Prostate gland (tissue), 2 donors: ENCODE measurements at regions of chr20 and their contacts with region 1.

Region 1: GRCh38 chr20:34129518-34130162 is 17.6 kb upstream of the EIF2S2 start:
- DNase-seq: peak; percentile 72
- H3K4me3 ChIP-seq: no peak overlapping the region
- H3K27ac ChIP-seq: no peak overlapping the region
- H3K4me1 ChIP-seq: no peaks in the 10 kb centered on the region
- H3K27me3 ChIP-seq: no peaks in the 10 kb centered on the region
- CTCF ChIP-seq: peak; percentile 48 to 90 (median 89)
- POLR2A ChIP-seq: no peak

Region 2: DNA sequence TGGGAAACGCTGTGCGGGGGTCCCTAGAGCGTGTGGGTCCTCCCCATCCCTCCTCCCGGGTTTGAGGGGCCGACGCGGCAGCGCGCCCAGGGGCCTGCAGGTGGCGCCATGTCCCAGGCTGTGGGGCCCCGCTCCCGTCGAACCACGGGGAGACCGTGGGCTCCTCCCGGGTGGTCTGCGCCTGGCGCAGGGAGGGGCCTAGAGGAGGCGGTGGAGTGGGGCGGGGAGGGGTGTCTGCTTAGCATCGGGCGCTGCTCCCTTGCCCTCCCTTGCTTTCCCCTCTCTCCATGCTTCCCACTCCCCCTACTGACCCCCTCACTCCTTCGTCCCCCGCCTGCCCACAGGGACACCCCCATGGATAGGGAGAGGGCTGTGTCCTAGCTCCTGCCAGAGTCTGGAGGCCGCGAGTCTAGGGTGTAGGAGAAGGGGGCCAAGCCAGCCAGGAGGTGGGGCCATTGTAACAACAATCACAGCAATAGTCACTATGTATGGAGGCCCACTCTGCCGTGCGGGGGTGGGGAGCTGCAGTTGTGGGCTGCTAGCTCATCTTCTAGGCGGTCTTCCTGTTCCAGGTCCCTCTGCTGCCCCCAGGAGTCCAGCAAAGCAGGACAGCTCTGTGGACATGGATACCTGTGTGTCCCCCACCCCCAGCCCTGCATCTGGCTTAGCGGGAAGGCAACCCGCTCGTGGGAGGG is 266.8 kb before region 1 on chr20:
- intact Hi-C with region 1: loop called (anchors 2 kb)
- DNase-seq: peak; percentile 19
- H3K4me3 ChIP-seq: no peak overlapping the region
- H3K27ac ChIP-seq: no peak overlapping the region
- H3K4me1 ChIP-seq: no peaks in the 10 kb centered on the region
- H3K27me3 ChIP-seq: no peaks in the 10 kb centered on the region
- CTCF ChIP-seq: peak; percentile 35 to 67 (median 59)
- POLR2A ChIP-seq: no peak

Region 3: DNA sequence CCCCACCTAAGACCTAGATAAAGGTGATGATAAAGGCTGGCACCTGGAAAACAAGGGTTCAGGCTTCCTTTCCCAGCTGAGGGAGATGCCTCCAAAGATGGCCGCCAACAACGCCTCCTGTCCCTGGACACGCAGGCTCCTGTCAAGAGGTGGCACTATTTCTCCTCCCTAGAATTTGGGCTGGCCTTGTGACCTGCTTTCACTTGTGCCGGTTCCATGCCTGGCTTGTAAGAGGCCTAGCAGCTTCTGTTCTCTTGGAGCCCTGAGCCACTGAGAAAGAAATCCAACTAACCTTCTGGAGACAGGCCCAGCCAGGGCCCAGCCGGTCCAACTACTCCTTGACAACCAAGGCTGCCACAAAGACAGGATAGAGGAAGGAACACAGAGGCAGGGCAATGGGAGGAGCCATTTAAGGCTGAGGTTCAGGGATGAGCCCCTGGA is 196.2 kb before region 1 on chr20:
- intact Hi-C with region 1: loop called (anchors 5 kb)
- DNase-seq: peak; percentile 46
- H3K4me3 ChIP-seq: no peak overlapping the region
- H3K27ac ChIP-seq: peak overlapping the region in 1 of 2 donors; percentile 35
- H3K4me1 ChIP-seq: no peaks in the 10 kb centered on the region
- H3K27me3 ChIP-seq: no peaks in the 10 kb centered on the region
- CTCF ChIP-seq: peak in 3 of 4 experiments; percentile 26 to 56 (median 48)
- POLR2A ChIP-seq: no peak

Region 4: GRCh38 chr20:33992923-33993575 is 136.6 kb before region 1 on chr20:
- intact Hi-C with region 1: no loop called
- DNase-seq: peak; percentile 99
- H3K4me3 ChIP-seq: peak overlapping the region; percentile 89 to 94
- H3K27ac ChIP-seq: peak overlapping the region; percentile 94 to 97
- H3K4me1 ChIP-seq: peaks cover 15% of the 10 kb centered on the region
- H3K27me3 ChIP-seq: no peaks in the 10 kb centered on the region
- CTCF ChIP-seq: no peak
- POLR2A ChIP-seq: peak; percentile 82

Region 5: GRCh38 chr20:34938502-34939163 is 809.0 kb after region 1 on chr20:
- intact Hi-C with region 1: no loop called
- DNase-seq: peak; percentile 41
- H3K4me3 ChIP-seq: no peak overlapping the region
- H3K27ac ChIP-seq: no peak overlapping the region
- H3K4me1 ChIP-seq: no peaks in the 10 kb centered on the region
- H3K27me3 ChIP-seq: no peaks in the 10 kb centered on the region
- CTCF ChIP-seq: no peak
- POLR2A ChIP-seq: no peak